ENCODE measurements at regions of chrX and their contacts with region 1.

Region 1: GRCh38 chrX:119574394-119575266 is at the start of gene UBE2A:
- DNase-seq: peak; percentile 65 to 96 (median 78)

Region 2: GRCh38 chrX:119529345-119530276 is 45.0 kb before region 1 on chrX:
- intact Hi-C with region 1: no loop called
- DNase-seq: no peak

Region 3: GRCh38 chrX:119606280-119607015 is 31.8 kb after region 1 on chrX and contains the start of gene NKRF:
- intact Hi-C with region 1: loop called (anchors 1 kb)
- DNase-seq: peak; percentile 74 to 97 (median 85)

Measured in posterior cingulate gyrus (tissue), 11 donors.